T-cell (primary cell): ENCODE measurements at regions of chr12 and their contacts with region 1.

Region 1: GRCh38 chr12:14948672-14949071 is 10.3 kb upstream of the ERP27 start:
- DNase-seq: peak in 28 of 35 experiments; percentile 42 to 87 (median 58)
- ATAC-seq: peak; percentile 82 to 90 (median 88)
- H3K4me3 ChIP-seq: peak overlapping the region; percentile 23 to 60
- H3K4me3 Mint-ChIP-seq: peak overlapping the region; percentile 73 to 97 (median 82)
- H3K27ac ChIP-seq: peak overlapping the region; percentile 97
- H3K27ac Mint-ChIP-seq: peak overlapping the region; percentile 96 to 99
- H3K4me1 ChIP-seq: peaks cover 57 to 76% of the 10 kb centered on the region in 2 experiments
- H3K4me1 Mint-ChIP-seq: peaks cover 93 to 94% (median 94%) of the 10 kb centered on the region in 3 donors
- H3K27me3 ChIP-seq: no peaks in the 10 kb centered on the region
- H3K27me3 Mint-ChIP-seq: no peaks in the 10 kb centered on the region

Region 2: DNA sequence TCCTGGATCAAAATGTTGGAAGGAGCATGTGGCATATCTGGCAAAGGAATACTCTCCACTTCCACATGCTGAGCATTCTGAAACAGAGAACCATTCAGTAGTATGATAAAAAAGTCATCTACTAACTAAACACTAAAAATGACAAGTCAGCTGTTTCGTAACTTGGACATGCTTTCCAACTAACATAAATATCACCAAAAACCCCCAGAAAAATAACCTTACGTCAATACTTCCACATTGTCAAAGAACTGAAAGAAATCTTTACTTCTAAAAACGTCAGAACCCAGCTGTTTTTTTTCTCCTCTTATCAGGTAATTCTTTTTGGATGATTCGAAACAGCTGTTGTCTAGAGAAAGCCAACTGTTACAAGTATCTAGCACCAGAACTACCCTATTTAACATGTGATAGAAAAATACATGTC is 153.6 kb before region 1 on chr12:
- CTCF ChIA-PET with region 1: interaction called in 1 of 2 experiments, 6 read pairs
- POLR2A ChIA-PET with region 1: interaction called in 1 of 2 experiments, 15 read pairs
- DNase-seq: no peak
- ATAC-seq: no peak
- H3K4me3 ChIP-seq: no peak overlapping the region
- H3K4me3 Mint-ChIP-seq: no peak overlapping the region
- H3K27ac ChIP-seq: no peak overlapping the region
- H3K27ac Mint-ChIP-seq: no peak overlapping the region
- H3K4me1 ChIP-seq: no peaks in the 10 kb centered on the region
- H3K4me1 Mint-ChIP-seq: peaks cover 3 to 9% (median 4%) of the 10 kb centered on the region in 3 donors
- H3K27me3 ChIP-seq: no peaks in the 10 kb centered on the region
- H3K27me3 Mint-ChIP-seq: no peaks in the 10 kb centered on the region

Region 3: DNA sequence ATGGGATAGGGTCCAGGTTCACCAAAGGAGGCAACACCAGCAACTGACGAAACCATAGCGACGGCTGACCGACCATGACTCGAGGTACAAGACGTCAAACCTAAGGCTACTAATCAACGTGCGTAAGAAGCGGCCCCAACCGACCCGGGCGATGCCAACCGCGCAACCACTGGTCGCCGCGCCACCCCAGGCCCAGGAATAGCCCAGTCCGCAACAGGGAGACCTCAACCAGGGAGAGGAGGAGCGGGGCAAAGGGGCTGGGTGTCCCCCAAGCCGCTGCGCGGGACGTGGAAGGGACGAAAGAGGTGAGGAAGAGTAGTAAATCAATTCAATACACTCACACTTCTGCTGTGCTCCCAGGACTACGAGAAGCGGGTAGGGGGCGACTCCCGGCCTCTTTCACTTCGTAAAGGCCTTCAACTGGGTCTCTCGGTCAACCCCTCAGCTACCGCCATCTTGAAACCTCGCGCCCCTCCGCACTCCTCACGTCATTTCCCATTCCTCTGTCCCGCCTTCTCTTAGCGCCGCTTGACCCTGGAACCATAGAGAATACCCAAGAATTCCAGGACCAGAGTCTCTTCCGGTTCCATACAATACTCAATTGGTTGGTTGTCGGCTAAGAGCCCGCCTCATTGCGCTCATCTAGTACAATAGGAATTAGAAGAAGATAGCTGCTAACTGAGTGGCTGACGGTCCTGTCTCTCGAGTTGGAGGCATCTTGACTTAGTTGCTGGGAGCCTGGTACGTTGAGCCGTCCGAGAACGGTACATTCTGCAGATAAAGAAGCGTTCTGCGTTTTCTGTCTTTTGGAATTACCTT is 145.5 kb before region 1 on chr12 and contains the starts of genes C12orf60 and WBP11:
- CTCF ChIA-PET with region 1: interaction called in 1 of 2 experiments, 3 read pairs
- POLR2A ChIA-PET with region 1: interaction called, 3 to 12 read pairs
- DNase-seq: peak; percentile 62 to 96 (median 87)
- ATAC-seq: peak; percentile 95 to 99 (median 96)
- H3K4me3 ChIP-seq: peak within 1 kb of the TSS; percentile 72 to 90
- H3K4me3 Mint-ChIP-seq: no peak within 1 kb of the TSS
- H3K27ac ChIP-seq: peak within 1 kb of the TSS; percentile 93
- H3K27ac Mint-ChIP-seq: no peak within 1 kb of the TSS
- H3K4me1 ChIP-seq: peaks cover 7 to 18% of the 10 kb centered on the region in 2 experiments
- H3K4me1 Mint-ChIP-seq: peaks cover 0 to 24% (median 17%) of the 10 kb centered on the region in 3 donors
- H3K27me3 ChIP-seq: no peaks in the 10 kb centered on the region
- H3K27me3 Mint-ChIP-seq: no peaks in the 10 kb centered on the region
- total RNA-seq, gene C12orf60: 0.50 to 1.4 (median 0.93) TPM in 4 of 5 donors, not detected in the other
- total RNA-seq, gene WBP11: 72.6 to 122 (median 80.6) TPM

Region 4: GRCh38 chr12:14960548-14961465 is 12.1 kb after region 1 on chr12:
- CTCF ChIA-PET with region 1: interaction called in 1 of 2 experiments, 8 read pairs
- POLR2A ChIA-PET with region 1: interaction called, 6 to 12 read pairs
- DNase-seq: peak in 34 of 35 experiments; percentile 26 to 75 (median 54)
- ATAC-seq: peak; percentile 51 to 62 (median 61)
- H3K4me3 ChIP-seq: peak overlapping the region; percentile 77 to 88
- H3K4me3 Mint-ChIP-seq: peak overlapping the region; percentile 97 to 98 (median 98)
- H3K27ac ChIP-seq: peak overlapping the region; percentile 97
- H3K27ac Mint-ChIP-seq: peak overlapping the region; percentile 95 to 98
- H3K4me1 ChIP-seq: peaks cover 41 to 49% of the 10 kb centered on the region in 2 experiments
- H3K4me1 Mint-ChIP-seq: peaks cover 66 to 77% (median 71%) of the 10 kb centered on the region in 3 donors
- H3K27me3 ChIP-seq: no peaks in the 10 kb centered on the region
- H3K27me3 Mint-ChIP-seq: no peaks in the 10 kb centered on the region

Region 5: GRCh38 chr12:14981049-14981448 is 32.4 kb after region 1 on chr12:
- CTCF ChIA-PET with region 1: no interaction called
- POLR2A ChIA-PET with region 1: no interaction called
- DNase-seq: no peak
- ATAC-seq: no peak
- H3K4me3 ChIP-seq: no peak overlapping the region
- H3K4me3 Mint-ChIP-seq: peak overlapping the region in 1 of 3 donors; percentile 12
- H3K27ac ChIP-seq: no peak overlapping the region
- H3K27ac Mint-ChIP-seq: peak overlapping the region in 1 of 2 donors; percentile 62
- H3K4me1 ChIP-seq: peaks cover 18 to 48% of the 10 kb centered on the region in 2 experiments
- H3K4me1 Mint-ChIP-seq: peaks cover 66 to 77% (median 66%) of the 10 kb centered on the region in 3 donors
- H3K27me3 ChIP-seq: no peaks in the 10 kb centered on the region
- H3K27me3 Mint-ChIP-seq: no peaks in the 10 kb centered on the region

Region 6: DNA sequence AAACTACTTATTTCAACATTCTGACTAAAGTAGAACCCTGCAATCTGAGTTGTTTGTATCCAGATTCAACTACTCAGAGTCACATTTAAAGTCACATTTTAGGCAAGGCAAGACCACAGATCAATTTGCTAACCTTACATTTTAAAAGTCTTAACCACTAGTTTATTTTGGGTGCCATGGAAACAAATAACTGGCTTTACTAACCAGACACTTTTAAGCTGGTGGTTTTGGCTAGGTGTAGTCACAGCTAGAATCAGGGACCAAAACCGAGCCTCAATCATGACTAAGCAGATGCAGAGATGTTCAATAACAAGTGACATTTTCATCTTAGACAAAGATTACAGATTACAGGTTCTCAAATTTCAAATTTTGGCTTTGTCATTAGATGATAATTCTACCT is 139.4 kb after region 1 on chr12:
- CTCF ChIA-PET with region 1: no interaction called
- POLR2A ChIA-PET with region 1: no interaction called
- DNase-seq: peak in 1 of 35 experiments; percentile 2
- ATAC-seq: peak in 1 of 4 experiments; percentile 64
- H3K4me3 ChIP-seq: no peak overlapping the region
- H3K4me3 Mint-ChIP-seq: no peak overlapping the region
- H3K27ac ChIP-seq: no peak overlapping the region
- H3K27ac Mint-ChIP-seq: no peak overlapping the region
- H3K4me1 ChIP-seq: no peaks in the 10 kb centered on the region
- H3K4me1 Mint-ChIP-seq: peaks cover 0 to 7% (median 5%) of the 10 kb centered on the region in 3 donors
- H3K27me3 ChIP-seq: no peaks in the 10 kb centered on the region
- H3K27me3 Mint-ChIP-seq: peaks cover 4 to 23% of the 10 kb centered on the region in 2 donors